BJ (cell line): ENCODE measurements at regions of chr1 and their contacts with region 1.

Region 1: GRCh38 chr1:110053557-110054428 is 16.7 kb downstream of the ALX3 start:
- DNase-seq: no peak
- H3K4me3 ChIP-seq: no peak overlapping the region
- H3K27me3 ChIP-seq: no peaks in the 10 kb centered on the region
- CTCF ChIP-seq: peak; percentile 97

Region 2: GRCh38 chr1:110034451-110035235 is 19.1 kb before region 1 on chr1 and contains the start of gene STRIP1:
- CTCF ChIA-PET with region 1: interaction called, 98 read pairs
- POLR2A ChIA-PET with region 1: interaction called, 3 read pairs
- DNase-seq: peak; percentile 87
- H3K4me3 ChIP-seq: peak within 1 kb of the TSS; percentile 79
- H3K27me3 ChIP-seq: no peaks in the 10 kb centered on the region
- CTCF ChIP-seq: no peak
- polyA plus RNA-seq, gene STRIP1: 37.3 and 46.2 TPM in 2 replicates

Region 3: GRCh38 chr1:110082477-110082876 is 28.7 kb after region 1 on chr1:
- CTCF ChIA-PET with region 1: interaction called, 100 read pairs
- POLR2A ChIA-PET with region 1: no interaction called
- DNase-seq: no peak
- H3K4me3 ChIP-seq: peak overlapping the region; percentile 40
- H3K27me3 ChIP-seq: peaks cover 2% of the 10 kb centered on the region; the same call in 1 of the 2 replicates
- CTCF ChIP-seq: no peak

Region 4: GRCh38 chr1:110106013-110106941 is 52.5 kb after region 1 on chr1:
- CTCF ChIA-PET with region 1: interaction called, 345 read pairs
- POLR2A ChIA-PET with region 1: no interaction called
- DNase-seq: no peak
- H3K4me3 ChIP-seq: no peak overlapping the region
- H3K27me3 ChIP-seq: no peaks in the 10 kb centered on the region
- CTCF ChIP-seq: peak; percentile 90

Region 5: DNA sequence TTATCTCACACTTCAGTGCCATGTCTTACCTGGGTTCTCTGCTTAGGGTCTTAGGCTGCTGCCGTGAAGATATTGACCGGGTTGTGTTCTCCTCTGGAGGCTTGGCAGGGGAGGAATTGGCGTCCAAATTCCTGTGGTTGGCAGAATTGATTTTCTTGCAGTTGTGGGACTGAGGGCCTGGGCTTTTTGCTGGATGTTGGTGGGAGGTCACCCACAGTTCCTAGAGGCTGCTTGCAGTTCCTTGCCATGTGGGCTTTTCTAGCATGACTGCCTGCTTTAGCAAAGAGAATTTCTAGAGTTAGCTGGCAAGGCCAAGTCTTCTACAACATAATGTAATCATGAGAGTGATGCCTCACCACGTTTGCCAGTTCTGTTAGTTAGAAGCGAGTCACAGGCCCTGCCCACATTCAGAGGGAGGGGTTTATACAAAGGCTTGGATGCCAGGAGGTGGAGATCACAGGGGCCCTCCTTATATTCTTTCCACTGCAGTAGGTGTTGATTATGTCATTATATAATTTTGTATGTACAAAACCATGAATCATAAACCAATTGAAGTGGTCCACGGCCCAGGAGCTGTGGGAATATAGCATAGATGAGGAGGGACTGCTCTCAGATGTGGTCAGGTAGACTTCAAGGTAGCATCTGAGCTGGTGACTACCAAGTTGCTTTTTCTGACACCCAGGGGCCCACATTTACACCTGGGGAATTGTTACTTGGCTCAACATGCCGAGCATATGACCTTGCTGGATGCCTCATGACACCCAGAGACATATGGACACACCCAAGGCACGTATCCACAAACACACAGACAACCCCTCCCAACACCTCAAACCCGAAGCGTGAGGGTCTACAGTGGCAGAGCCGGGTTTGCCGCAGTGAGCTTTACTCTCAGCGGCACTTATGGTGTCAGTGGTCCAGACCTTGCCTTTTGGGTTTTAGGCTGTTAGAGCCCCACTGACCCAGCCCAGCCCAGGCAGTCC is 65.1 kb after region 1 on chr1:
- CTCF ChIA-PET with region 1: interaction called, 50 read pairs
- POLR2A ChIA-PET with region 1: no interaction called
- DNase-seq: no peak
- H3K4me3 ChIP-seq: no peak overlapping the region
- H3K27me3 ChIP-seq: no peaks in the 10 kb centered on the region
- CTCF ChIP-seq: no peak